ENCODE measurements at regions of chr1 and their contacts with region 1.

Region 1: DNA sequence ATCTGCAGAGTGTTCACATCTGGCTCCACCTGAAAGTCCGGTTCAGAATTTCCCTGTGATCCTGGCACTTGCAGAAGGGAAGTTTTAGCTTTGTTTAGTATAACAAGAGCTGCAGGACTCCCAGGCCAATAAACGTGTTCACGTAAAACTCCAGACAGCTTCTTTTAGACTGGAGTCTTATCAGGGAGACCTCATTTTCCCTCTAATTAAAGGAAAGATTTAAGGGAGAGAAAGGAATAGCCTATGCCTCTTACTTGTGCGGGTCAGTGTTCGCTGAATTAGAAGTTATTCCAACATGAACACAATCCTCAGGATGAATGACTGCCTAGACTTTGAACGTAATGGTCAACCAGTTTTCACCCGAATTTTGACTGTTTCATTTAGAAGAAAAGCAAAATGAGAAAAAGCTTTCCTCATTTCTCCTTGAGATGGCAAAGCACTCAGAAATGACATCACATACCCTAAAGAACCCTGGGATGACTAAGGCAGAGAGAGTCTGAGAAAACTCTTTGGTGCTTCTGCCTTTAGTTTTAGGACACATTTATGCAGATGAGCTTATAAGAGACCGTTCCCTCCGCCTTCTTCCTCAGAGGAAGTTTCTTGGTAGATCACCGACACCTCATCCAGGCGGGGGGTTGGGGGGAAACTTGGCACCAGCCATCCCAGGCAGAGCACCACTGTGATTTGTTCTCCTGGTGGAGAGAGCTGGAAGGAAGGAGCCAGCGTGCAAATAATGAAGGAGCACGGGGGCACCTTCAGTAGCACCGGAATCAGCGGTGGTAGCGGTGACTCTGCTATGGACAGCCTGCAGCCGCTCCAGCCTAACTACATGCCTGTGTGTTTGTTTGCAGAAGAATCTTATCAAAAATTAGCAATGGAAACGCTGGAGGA is 202.1 kb upstream of the SGIP1 start:
- DNase-seq: peak; percentile 42
- H3K4me3 Mint-ChIP-seq: peak overlapping the region; percentile 97
- H3K27ac Mint-ChIP-seq: peak overlapping the region; percentile 98
- H3K4me1 Mint-ChIP-seq: peaks cover 54% of the 10 kb centered on the region
- H3K27me3 Mint-ChIP-seq: no peaks in the 10 kb centered on the region

Region 2: DNA sequence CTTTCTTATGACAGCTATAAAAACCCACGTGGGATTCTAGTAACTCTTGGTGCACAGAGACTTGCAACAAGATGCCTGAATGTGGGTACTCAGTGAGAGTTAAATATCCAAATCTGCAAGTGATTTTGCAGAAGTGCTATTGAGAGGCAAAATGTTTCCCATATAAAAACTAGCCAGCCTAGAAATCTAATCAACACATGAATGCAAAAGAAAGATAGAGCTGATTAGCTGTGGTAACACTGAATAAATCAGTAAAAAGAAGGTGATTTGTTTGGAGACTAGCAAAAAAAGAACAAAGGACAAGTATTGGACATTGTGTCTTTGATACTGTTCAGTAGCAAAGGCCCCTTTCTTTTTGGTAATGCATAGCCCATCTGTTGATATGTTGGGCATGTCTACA is 11.7 kb before region 1 on chr1:
- CTCF ChIA-PET with region 1: interaction called, 15 read pairs
- POLR2A ChIA-PET with region 1: no interaction called
- DNase-seq: no peak
- H3K4me3 Mint-ChIP-seq: no peak overlapping the region
- H3K27ac Mint-ChIP-seq: no peak overlapping the region
- H3K4me1 Mint-ChIP-seq: peaks cover 28% of the 10 kb centered on the region
- H3K27me3 Mint-ChIP-seq: no peaks in the 10 kb centered on the region

Region 3: GRCh38 chr1:66342707-66343106 is 10.8 kb after region 1 on chr1:
- CTCF ChIA-PET with region 1: interaction called, 20 read pairs
- POLR2A ChIA-PET with region 1: interaction called, 3 read pairs
- DNase-seq: no peak
- H3K4me3 Mint-ChIP-seq: peak overlapping the region; percentile 26
- H3K27ac Mint-ChIP-seq: peak overlapping the region; percentile 2
- H3K4me1 Mint-ChIP-seq: peaks cover 83% of the 10 kb centered on the region
- H3K27me3 Mint-ChIP-seq: no peaks in the 10 kb centered on the region